ENCODE measurements at regions of chr16 and their contacts with region 1.

Region 1: GRCh38 chr16:30112197-30113030 is 923 bp downstream of the GDPD3 start:
- DNase-seq: no peak
- H3K4me3 ChIP-seq: no peak overlapping the region
- CTCF ChIP-seq: peak; percentile 75

Region 2: DNA sequence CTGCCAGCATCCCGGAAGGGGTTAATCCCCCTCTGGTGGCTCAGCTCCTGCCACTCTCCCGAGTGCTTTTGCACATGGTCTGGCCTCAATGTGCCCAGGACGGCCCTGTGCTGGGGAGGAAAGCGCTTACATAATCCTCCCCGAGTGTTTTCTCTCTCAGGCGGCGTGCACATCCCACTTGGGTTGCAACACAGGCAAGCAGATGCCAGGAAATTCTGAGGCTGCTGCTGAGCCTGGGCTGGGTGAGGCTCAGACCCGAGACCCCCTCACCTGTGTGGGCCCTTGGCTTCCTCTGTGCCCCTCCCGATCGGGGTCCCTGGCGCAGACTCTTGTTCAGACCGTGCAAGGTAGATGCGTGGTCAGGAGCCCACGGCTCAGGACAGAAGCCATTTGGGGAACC is 982.9 kb before region 1 on chr16:
- CTCF ChIA-PET with region 1: no interaction called
- POLR2A ChIA-PET with region 1: no interaction called
- DNase-seq: no peak
- H3K4me3 ChIP-seq: no peak overlapping the region
- CTCF ChIP-seq: no peak

Region 3: GRCh38 chr16:30063893-30064731 is 48.3 kb before region 1 on chr16:
- CTCF ChIA-PET with region 1: no interaction called
- POLR2A ChIA-PET with region 1: no interaction called
- DNase-seq: no peak
- H3K4me3 ChIP-seq: peak overlapping the region; percentile 69
- CTCF ChIP-seq: peak; percentile 23

Region 4: GRCh38 chr16:30122604-30123160 is 10.3 kb after region 1 on chr16:
- CTCF ChIA-PET with region 1: interaction called, 28 read pairs
- POLR2A ChIA-PET with region 1: no interaction called
- DNase-seq: no peak
- H3K4me3 ChIP-seq: peak overlapping the region; percentile 73
- CTCF ChIP-seq: no peak

Measured in AG04449 (cell line).